GM12878 (cell line): ENCODE measurements at regions of chr2 and their contacts with region 1.

Region 1: GRCh38 chr2:46547223-46548102 is 68.1 kb downstream of the TMEM247 start:
- DNase-seq: no peak
- ATAC-seq: peak; percentile 5
- H3K4me3 ChIP-seq: peak overlapping the region; percentile 36; the same call in 1 of the 2 replicates
- H3K27ac ChIP-seq: peak overlapping the region; percentile 71
- H3K4me1 ChIP-seq: peaks cover 55% of the 10 kb centered on the region
- H3K27me3 ChIP-seq: no peaks in the 10 kb centered on the region
- CTCF ChIP-seq: no peak
- EP300 ChIP-seq: no peak
- POLR2A ChIP-seq: no peak
- RAD21 ChIP-seq: no peak

Region 2: GRCh38 chr2:46369783-46370380 is 177.6 kb before region 1 on chr2:
- CTCF ChIA-PET with region 1: no interaction called
- POLR2A ChIA-PET with region 1: no interaction called
- RAD21 ChIA-PET with region 1: no interaction called
- SMC1A ChIA-PET with region 1: no interaction called
- in situ Hi-C with region 1: no loop called
- intact Hi-C with region 1: no loop called
- DNase-seq: no peak
- ATAC-seq: no peak
- H3K4me3 ChIP-seq: no peak overlapping the region
- H3K27ac ChIP-seq: no peak overlapping the region
- H3K4me1 ChIP-seq: no peaks in the 10 kb centered on the region
- H3K27me3 ChIP-seq: peaks cover 0 to 7% of the 10 kb centered on the region in 2 experiments; a peak in 2 of 4 replicates
- CTCF ChIP-seq: no peak
- EP300 ChIP-seq: no peak
- POLR2A ChIP-seq: no peak
- RAD21 ChIP-seq: no peak

Region 3: GRCh38 chr2:46385786-46386577 is 161.5 kb before region 1 on chr2:
- CTCF ChIA-PET with region 1: no interaction called
- POLR2A ChIA-PET with region 1: no interaction called
- RAD21 ChIA-PET with region 1: no interaction called
- SMC1A ChIA-PET with region 1: no interaction called
- in situ Hi-C with region 1: no loop called
- intact Hi-C with region 1: no loop called
- DNase-seq: no peak
- ATAC-seq: no peak
- H3K4me3 ChIP-seq: no peak overlapping the region
- H3K27ac ChIP-seq: no peak overlapping the region
- H3K4me1 ChIP-seq: no peaks in the 10 kb centered on the region
- H3K27me3 ChIP-seq: peaks cover 0 to 4% of the 10 kb centered on the region in 2 experiments; a peak in 2 of 4 replicates
- CTCF ChIP-seq: no peak
- EP300 ChIP-seq: no peak
- POLR2A ChIP-seq: no peak
- RAD21 ChIP-seq: no peak

Region 4: GRCh38 chr2:46434851-46435273 is 112.6 kb before region 1 on chr2:
- CTCF ChIA-PET with region 1: no interaction called
- POLR2A ChIA-PET with region 1: no interaction called
- RAD21 ChIA-PET with region 1: no interaction called
- SMC1A ChIA-PET with region 1: no interaction called
- in situ Hi-C with region 1: no loop called
- intact Hi-C with region 1: no loop called
- DNase-seq: no peak
- ATAC-seq: no peak
- H3K4me3 ChIP-seq: no peak overlapping the region
- H3K27ac ChIP-seq: no peak overlapping the region
- H3K4me1 ChIP-seq: no peaks in the 10 kb centered on the region
- H3K27me3 ChIP-seq: no peaks in the 10 kb centered on the region; a peak in 1 of 4 replicates
- CTCF ChIP-seq: no peak
- EP300 ChIP-seq: no peak
- POLR2A ChIP-seq: no peak
- RAD21 ChIP-seq: no peak

Region 5: DNA sequence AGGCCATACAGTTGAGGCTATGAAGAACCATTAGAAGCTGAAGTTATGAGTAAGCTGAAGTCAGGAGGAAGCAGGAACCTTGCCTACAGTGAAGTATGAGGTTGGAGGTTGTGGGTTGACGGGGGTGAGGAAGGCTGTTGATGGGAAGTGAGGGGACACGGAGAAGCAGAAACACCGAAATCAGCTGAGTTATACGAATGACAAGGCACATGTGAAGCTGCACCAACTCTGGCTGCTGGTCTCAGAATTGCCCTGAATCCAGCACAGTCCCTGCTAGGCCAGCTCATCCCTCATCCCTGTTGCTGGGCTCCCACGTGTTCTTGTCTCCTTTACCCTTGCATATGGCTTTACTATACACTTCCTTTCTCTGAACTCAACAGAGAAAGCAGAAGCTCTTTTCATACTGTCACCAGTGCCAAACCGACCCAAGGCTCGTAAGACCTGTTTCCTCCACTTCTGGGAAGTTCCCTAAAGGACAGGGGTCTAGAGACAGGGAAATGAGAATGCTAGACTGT is 77.3 kb before region 1 on chr2:
- CTCF ChIA-PET with region 1: interaction called, 3 read pairs
- POLR2A ChIA-PET with region 1: no interaction called
- RAD21 ChIA-PET with region 1: interaction called, 8 read pairs
- SMC1A ChIA-PET with region 1: interaction called, 38 read pairs
- in situ Hi-C with region 1: no loop called
- intact Hi-C with region 1: no loop called
- DNase-seq: no peak
- ATAC-seq: peak; percentile 16; the same call in 2 of the 3 replicates
- H3K4me3 ChIP-seq: no peak overlapping the region
- H3K27ac ChIP-seq: no peak overlapping the region
- H3K4me1 ChIP-seq: no peaks in the 10 kb centered on the region
- H3K27me3 ChIP-seq: no peaks in the 10 kb centered on the region
- CTCF ChIP-seq: no peak
- EP300 ChIP-seq: no peak
- POLR2A ChIP-seq: no peak
- RAD21 ChIP-seq: no peak

Region 6: DNA sequence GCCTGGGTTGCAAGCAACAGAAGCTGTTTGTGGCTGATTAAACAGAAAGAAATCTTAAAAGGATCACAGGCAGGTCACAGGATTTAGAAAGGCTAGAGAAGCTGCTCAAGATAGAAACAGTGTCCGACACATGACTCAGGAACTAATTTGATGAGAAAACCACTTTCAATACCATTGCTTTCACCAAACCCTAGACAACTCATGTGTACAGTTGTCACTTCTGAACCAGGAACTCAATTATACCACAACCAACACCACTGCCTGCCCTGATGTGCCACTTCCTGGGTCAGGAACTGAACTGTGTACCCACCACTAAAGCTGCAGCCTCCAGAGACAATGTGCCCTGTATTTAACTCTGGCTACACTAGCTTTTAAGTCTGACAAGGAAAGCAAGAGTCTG is 12.1 kb before region 1 on chr2:
- CTCF ChIA-PET with region 1: interaction called, 8 read pairs
- POLR2A ChIA-PET with region 1: interaction called, 19 read pairs
- RAD21 ChIA-PET with region 1: interaction called, 5 read pairs
- SMC1A ChIA-PET with region 1: interaction called, 24 read pairs
- in situ Hi-C with region 1: no loop called
- intact Hi-C with region 1: no loop called
- DNase-seq: peak; percentile 96
- ATAC-seq: peak; percentile 92
- H3K4me3 ChIP-seq: peak overlapping the region; percentile 17
- H3K27ac ChIP-seq: peak overlapping the region; percentile 45
- H3K4me1 ChIP-seq: peaks cover 33% of the 10 kb centered on the region
- H3K27me3 ChIP-seq: no peaks in the 10 kb centered on the region
- CTCF ChIP-seq: no peak
- EP300 ChIP-seq: peak; percentile 58 to 88; a peak in 3 of 4 replicates
- POLR2A ChIP-seq: no peak
- RAD21 ChIP-seq: no peak

Region 7: DNA sequence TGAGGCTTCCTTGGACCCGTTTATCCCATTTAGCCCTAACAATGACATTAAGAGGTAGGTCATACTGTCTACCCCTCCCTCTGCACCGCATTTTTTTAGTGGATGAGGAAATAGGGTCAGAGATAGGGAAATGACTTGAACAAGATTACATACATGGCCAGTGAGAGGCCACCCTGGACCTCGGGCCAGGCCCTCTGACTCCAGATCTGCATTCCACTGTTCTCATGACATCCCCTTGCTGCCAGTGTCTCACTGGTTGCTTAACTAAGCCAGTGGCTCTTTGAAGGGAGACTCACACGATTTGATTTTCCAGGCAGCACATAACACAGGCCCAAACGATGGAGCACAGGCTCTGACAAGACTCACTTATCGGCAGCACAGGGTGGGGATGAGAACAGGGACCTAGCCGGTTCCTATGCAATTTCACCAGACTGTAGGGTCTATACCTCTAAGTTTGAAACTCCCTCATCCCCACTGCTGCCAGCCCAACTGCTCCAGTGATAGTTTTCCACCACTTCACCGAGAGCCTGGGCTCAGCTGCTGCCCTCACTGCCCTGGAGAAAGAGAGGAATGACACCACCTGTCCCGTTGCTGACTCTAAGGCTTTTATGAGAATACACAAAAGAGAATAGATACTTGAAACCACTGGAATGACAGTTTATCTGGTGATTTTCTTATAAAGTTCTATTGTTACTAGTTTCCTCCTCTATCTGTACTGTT is 14.4 kb after region 1 on chr2:
- CTCF ChIA-PET with region 1: interaction called, 15 read pairs
- POLR2A ChIA-PET with region 1: interaction called, 9 read pairs
- RAD21 ChIA-PET with region 1: interaction called, 23 read pairs
- SMC1A ChIA-PET with region 1: interaction called, 188 read pairs
- in situ Hi-C with region 1: no loop called
- intact Hi-C with region 1: no loop called
- DNase-seq: no peak
- ATAC-seq: no peak
- H3K4me3 ChIP-seq: no peak overlapping the region
- H3K27ac ChIP-seq: peak overlapping the region; percentile 66
- H3K4me1 ChIP-seq: peaks cover 53% of the 10 kb centered on the region
- H3K27me3 ChIP-seq: no peaks in the 10 kb centered on the region
- CTCF ChIP-seq: no peak
- EP300 ChIP-seq: no peak
- POLR2A ChIP-seq: no peak
- RAD21 ChIP-seq: no peak

Region 8: DNA sequence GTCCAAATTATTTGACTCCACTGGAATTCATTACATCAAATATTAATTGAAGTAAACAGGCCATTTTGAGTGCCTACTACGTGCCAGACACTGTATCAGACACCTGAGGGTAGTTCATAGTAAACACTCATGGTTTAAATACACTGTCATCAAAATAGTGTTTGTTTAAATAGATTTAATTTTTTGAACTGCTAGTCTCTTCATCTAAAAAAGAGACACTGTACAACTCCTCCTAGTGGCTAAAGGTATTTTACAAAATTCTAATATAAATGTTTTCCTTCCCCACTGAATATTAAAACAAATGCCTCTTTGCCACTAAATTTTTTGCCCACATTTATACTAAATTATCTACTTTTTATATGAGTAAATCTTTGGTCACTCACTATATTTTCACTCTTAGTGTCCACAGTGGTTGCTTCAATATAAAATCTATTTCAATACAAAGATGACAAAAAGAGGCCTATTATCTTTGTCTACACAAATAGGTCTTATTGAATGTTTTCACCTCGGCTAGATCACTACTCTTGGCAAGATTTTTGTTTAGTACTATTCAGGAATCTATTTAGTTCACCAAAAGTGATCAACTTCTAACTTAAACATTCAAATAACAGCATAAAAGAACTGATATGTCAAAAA is 54.0 kb after region 1 on chr2:
- CTCF ChIA-PET with region 1: interaction called, 5 read pairs
- POLR2A ChIA-PET with region 1: interaction called, 3 read pairs
- RAD21 ChIA-PET with region 1: interaction called, 7 read pairs
- SMC1A ChIA-PET with region 1: interaction called, 10 read pairs
- in situ Hi-C with region 1: no loop called
- intact Hi-C with region 1: no loop called
- DNase-seq: no peak
- ATAC-seq: 0 out of 3 replicates have a peak, but pooled peaks have one; percentile 21
- H3K4me3 ChIP-seq: no peak overlapping the region
- H3K27ac ChIP-seq: no peak overlapping the region
- H3K4me1 ChIP-seq: no peaks in the 10 kb centered on the region
- H3K27me3 ChIP-seq: no peaks in the 10 kb centered on the region
- CTCF ChIP-seq: peak; percentile 22 to 50 (median 31); a peak in 3 of 6 replicates
- EP300 ChIP-seq: no peak
- POLR2A ChIP-seq: no peak
- RAD21 ChIP-seq: 0 out of 2 replicates have a peak, but pooled peaks have one; percentile 38